Calu3 (cell line): ENCODE measurements at regions of chr10 and their contacts with region 1.

Region 1: DNA sequence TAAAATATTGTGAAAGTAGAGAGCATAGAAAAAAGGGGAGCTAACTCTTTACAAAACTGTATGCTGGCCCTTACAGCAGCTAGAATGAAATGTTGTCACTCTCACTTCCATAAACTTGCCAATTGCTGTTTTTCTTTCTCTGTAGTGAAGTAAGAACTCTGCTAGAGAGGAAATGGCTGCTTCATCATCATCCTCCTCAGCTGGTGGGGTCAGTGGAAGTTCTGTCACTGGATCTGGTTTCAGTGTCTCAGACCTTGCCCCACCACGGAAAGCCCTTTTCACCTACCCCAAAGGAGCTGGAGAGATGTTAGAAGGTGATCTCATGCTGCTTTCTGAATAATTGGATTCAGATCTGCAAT is 7.6 kb upstream of the ASCC1 start:
- DNase-seq: no peak
- H3K4me3 Mint-ChIP-seq: no peak overlapping the region
- H3K27ac Mint-ChIP-seq: peak overlapping the region; percentile 63
- H3K4me1 Mint-ChIP-seq: peaks cover 23% of the 10 kb centered on the region
- H3K27me3 Mint-ChIP-seq: no peaks in the 10 kb centered on the region
- CTCF ChIP-seq: no peak

Region 2: DNA sequence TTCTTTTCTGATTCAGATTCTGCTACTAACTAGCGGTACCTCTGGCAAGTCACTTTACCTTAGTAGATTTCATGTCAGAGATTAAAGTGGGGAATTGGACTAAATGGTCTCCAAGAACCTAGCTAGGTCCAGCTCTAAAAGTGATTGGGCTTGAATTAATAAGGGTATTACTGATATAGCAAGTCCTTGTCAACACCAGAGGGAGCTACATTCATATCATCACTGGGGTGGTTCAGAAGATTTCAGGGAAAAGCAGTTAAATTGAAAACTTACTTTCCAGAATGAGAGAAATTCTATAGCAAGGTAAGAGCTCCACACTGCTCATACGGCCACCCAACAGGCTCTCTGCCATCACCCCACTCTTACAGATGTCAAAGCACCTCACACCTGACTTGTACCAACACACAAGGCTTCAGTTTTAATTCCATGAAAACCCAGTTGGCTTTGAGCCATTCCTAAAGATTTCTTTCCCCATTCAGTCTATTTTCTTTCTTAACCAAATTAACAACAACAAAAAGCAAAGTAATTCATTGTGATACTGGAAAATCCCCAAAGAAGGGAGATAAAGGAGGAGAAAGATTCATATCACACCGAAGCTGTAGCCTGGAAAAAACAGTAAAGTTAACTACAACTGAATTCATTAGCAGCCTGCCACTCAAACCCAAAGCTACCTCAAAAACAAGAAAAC is 97.4 kb before region 1 on chr10:
- CTCF ChIA-PET with region 1: interaction called, 4 read pairs
- intact Hi-C with region 1: loop called (anchors 1 kb)
- DNase-seq: peak; percentile 24
- H3K4me3 Mint-ChIP-seq: no peak overlapping the region
- H3K27ac Mint-ChIP-seq: no peak overlapping the region
- H3K4me1 Mint-ChIP-seq: peaks cover 32% of the 10 kb centered on the region
- H3K27me3 Mint-ChIP-seq: no peaks in the 10 kb centered on the region
- CTCF ChIP-seq: no peak

Region 3: GRCh38 chr10:72389716-72390115 is 166.0 kb after region 1 on chr10:
- CTCF ChIA-PET with region 1: no interaction called
- intact Hi-C with region 1: no loop called
- DNase-seq: no peak
- H3K4me3 Mint-ChIP-seq: no peak overlapping the region
- H3K27ac Mint-ChIP-seq: no peak overlapping the region
- H3K4me1 Mint-ChIP-seq: peaks cover 10% of the 10 kb centered on the region
- H3K27me3 Mint-ChIP-seq: no peaks in the 10 kb centered on the region
- CTCF ChIP-seq: no peak